Esophagus squamous epithelium (tissue), 5 donors: ENCODE measurements at regions of chr11 and their contacts with region 1.

Region 1: GRCh38 chr11:34357701-34358257 is at the start of gene ABTB2:
- DNase-seq: peak; percentile 83
- H3K4me3 ChIP-seq: peak within 1 kb of the TSS; percentile 40 to 67 (median 56)
- H3K27ac ChIP-seq: peak within 1 kb of the TSS; percentile 51 to 85 (median 80)
- H3K4me1 ChIP-seq: peaks cover 22 to 43% (median 29%) of the 10 kb centered on the region in 3 donors
- H3K27me3 ChIP-seq: peaks cover 0 to 71% (median 2%) of the 10 kb centered on the region in 4 donors
- CTCF ChIP-seq: peak in 1 of 6 experiments; percentile 8
- POLR2A ChIP-seq: peak in 3 of 4 donors; percentile 67 to 94 (median 79)
- total RNA-seq, gene ABTB2: 0.79 to 4.1 (median 3.7) TPM

Region 2: GRCh38 chr11:33996498-33997454 is 361.0 kb before region 1 on chr11:
- intact Hi-C with region 1: loop called (anchors 5 kb)
- DNase-seq: peak; percentile 8
- H3K4me3 ChIP-seq: peak overlapping the region in 1 of 4 donors; percentile 44
- H3K27ac ChIP-seq: no peak overlapping the region
- H3K4me1 ChIP-seq: peaks cover 0 to 16% (median 9%) of the 10 kb centered on the region in 3 donors
- H3K27me3 ChIP-seq: peaks cover 0 to 7% (median 0%) of the 10 kb centered on the region in 4 donors
- CTCF ChIP-seq: peak; percentile 57 to 88 (median 84)
- POLR2A ChIP-seq: no peak

Region 3: DNA sequence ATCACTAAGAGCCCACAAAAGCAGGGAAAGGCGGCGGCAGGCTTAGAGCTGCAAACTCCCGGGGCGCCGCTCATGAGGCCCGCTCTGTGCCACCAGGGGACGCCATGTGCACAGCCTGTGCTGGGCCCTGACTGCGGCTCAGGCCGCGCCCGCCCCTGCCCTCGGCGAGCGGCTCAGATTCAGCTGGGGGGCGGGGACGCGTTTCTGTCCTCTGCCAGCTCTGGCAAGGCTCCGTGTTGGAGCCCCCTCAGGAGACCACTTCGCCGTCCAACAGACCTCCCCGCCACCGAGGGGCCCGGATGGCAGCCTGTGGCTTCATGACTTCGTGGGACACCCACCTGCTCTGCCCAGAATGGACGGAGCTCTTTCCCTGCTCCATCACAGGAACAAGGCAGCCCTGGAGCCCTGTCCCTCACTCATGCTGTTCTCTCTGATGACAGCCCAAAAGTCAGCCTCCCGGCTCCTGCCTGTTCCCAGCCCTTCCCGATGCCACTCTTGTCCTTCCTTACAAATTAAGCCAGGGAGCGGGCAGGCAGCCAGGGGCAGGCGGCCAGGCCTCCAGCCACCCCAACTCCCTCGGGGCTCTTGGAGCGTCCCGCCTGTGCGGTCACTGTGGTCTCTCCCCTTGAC is 183.3 kb before region 1 on chr11:
- intact Hi-C with region 1: loop called (anchors 2 kb)
- DNase-seq: no peak
- H3K4me3 ChIP-seq: peak overlapping the region in 3 of 4 donors; percentile 5 to 53 (median 28)
- H3K27ac ChIP-seq: no peak overlapping the region
- H3K4me1 ChIP-seq: peaks cover 6 to 28% (median 13%) of the 10 kb centered on the region in 3 donors
- H3K27me3 ChIP-seq: peaks cover 0 to 53% (median 0%) of the 10 kb centered on the region in 4 donors
- CTCF ChIP-seq: peak; percentile 80 to 98 (median 92)
- POLR2A ChIP-seq: no peak